Heart right ventricle (tissue), 16 donors: ENCODE measurements at regions of chr7 and their contacts with region 1.

Region 1: GRCh38 chr7:39616138-39616537 is 7.2 kb upstream of the RALA start:
- DNase-seq: no peak
- ATAC-seq: no peak
- H3K4me3 ChIP-seq: no peak overlapping the region
- H3K27ac ChIP-seq: no peak overlapping the region
- H3K4me1 ChIP-seq: peaks cover 0 to 7% (median 0%) of the 10 kb centered on the region in 9 donors
- H3K27me3 ChIP-seq: peaks cover 0 to 3% (median 0%) of the 10 kb centered on the region in 7 donors
- CTCF ChIP-seq: no peak

Region 2: DNA sequence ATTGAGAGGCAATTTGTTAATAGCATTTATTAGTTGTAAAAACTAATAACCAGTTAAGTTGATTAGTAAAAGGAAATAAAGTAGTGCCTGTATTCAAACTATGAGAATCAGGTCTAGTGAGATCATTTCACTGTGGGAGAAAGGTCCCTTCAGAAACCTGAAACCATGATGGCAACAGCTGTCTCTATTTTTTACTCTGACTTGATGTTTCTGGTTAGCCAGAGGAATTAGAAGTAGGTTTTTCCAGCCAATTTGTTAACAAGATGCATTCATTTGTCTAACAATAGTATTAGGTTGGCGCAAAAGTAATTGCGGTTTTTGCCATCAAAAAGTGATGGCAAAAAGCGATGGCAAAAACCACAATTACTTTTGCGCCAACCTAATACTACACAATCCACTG is 322.1 kb before region 1 on chr7:
- intact Hi-C with region 1: no loop called
- DNase-seq: no peak
- ATAC-seq: no peak
- H3K4me3 ChIP-seq: no peak overlapping the region
- H3K27ac ChIP-seq: no peak overlapping the region
- H3K4me1 ChIP-seq: no peaks in the 10 kb centered on the region
- H3K27me3 ChIP-seq: peaks cover 0 to 6% (median 0%) of the 10 kb centered on the region in 7 donors
- CTCF ChIP-seq: no peak

Region 3: GRCh38 chr7:39686261-39686924 is 70.3 kb after region 1 on chr7:
- intact Hi-C with region 1: loop called in 2 of 10 experiments (anchors 5 to 10 kb)
- DNase-seq: no peak
- ATAC-seq: no peak
- H3K4me3 ChIP-seq: no peak overlapping the region
- H3K27ac ChIP-seq: no peak overlapping the region
- H3K4me1 ChIP-seq: peaks cover 10 to 39% (median 31%) of the 10 kb centered on the region in 9 donors
- H3K27me3 ChIP-seq: no peaks in the 10 kb centered on the region
- CTCF ChIP-seq: no peak

Region 4: DNA sequence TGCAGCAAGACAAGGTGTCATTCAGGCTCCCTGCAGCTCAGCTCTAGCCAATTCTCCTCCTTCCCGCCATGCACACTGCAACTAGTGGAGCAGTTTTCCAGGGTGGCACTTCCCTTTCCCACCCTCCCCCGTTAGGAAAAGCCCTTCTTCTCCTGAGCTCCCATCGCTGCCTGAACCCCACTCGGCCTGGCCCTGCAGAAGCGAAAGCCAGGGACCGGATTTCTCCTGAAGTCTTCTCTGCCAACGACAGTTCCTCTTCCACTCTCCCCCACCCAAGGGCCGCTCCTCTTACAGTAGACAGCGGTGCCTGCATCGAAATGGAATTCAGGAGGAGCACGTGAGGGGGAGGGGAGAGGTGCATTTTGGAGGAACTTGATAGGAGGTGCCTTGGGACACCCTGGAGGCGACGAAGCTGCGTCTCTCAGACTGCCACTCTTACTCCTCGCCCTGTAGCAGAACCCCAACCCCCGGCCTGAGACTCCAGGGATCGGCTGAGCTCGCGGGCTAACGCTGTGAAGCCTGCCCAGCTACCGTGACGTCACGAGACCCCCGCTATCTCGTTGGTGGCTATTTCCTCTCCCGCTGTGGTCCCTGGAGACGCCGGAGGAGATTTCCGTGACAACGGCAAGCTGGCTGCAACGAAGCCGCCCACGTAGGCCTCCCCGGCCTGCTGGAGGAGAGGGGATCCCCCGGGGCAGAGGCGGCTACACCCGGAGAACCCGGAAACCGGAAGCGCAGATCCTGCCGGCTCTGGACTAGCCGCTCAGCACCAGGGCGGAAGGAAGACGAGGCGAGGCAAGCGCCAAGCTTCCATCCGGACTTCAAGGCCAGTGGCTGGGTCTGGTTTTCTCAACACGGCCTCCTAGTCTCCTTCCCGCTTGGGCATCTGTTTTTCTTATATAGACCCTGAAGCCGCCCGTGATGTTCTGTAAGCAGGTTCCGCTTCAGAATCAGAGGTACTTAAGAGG is 117.0 kb after region 1 on chr7:
- intact Hi-C with region 1: loop called in 5 of 10 experiments (anchors 5 to 10 kb)
- DNase-seq: peak; percentile 96 to 98
- ATAC-seq: peak; percentile 96 to 98 (median 97)
- H3K4me3 ChIP-seq: peak overlapping the region; percentile 11 to 64 (median 60)
- H3K27ac ChIP-seq: peak overlapping the region; percentile 12 to 89 (median 72)
- H3K4me1 ChIP-seq: peaks cover 0 to 33% (median 22%) of the 10 kb centered on the region in 9 donors
- H3K27me3 ChIP-seq: no peaks in the 10 kb centered on the region
- CTCF ChIP-seq: no peak